ENCODE measurements at regions of chr3 and their contacts with region 1.

Region 1: DNA sequence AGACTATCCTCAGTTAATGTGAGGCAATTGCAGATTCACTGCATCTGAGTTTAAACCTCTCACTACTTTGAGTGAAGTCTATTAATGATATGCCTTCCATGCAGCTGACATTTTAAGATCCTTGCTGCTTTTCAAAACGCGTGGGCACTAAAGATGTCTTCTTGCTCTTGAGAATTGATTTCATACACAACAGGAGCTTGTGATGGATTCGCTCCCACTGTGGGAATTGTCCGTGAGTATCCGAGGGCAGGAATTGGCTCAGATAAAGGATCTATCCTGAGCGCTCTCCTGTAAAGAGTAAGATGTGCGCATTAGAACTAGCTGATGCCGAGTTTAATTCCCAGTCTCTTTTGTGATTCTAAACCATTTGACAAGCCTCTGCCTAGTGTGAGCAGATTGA is 167.9 kb downstream of the ROBO2 start:
- DNase-seq: no peak
- H3K4me3 ChIP-seq: no peak overlapping the region
- H3K27ac ChIP-seq: no peak overlapping the region
- H3K4me1 ChIP-seq: no peaks in the 10 kb centered on the region
- H3K27me3 ChIP-seq: no peaks in the 10 kb centered on the region
- CTCF ChIP-seq: no peak

Region 2: DNA sequence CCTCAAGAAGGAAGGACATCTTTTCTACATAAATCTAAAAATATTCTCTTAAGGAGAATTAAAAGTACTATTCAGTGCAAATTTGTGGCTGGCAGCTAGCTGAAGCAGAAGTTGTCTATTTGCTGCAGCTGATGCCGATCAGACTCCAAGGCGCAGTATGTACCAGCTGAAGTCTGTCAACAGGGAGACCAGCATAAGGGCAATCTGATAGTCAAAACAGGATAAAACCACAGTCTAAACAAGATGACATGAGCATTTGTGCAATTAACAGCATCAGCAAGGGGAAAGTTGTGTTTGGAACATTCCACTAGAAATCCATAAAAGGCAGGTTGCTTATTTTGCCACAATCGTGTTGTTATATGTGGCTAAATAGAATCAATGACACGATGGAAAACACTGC is 366.0 kb before region 1 on chr3:
- CTCF ChIA-PET with region 1: no interaction called
- POLR2A ChIA-PET with region 1: interaction called, 10 read pairs
- intact Hi-C with region 1: no loop called
- DNase-seq: no peak
- H3K4me3 ChIP-seq: no peak overlapping the region
- H3K27ac ChIP-seq: no peak overlapping the region
- H3K4me1 ChIP-seq: no peaks in the 10 kb centered on the region
- H3K27me3 ChIP-seq: no peaks in the 10 kb centered on the region
- CTCF ChIP-seq: no peak

Region 3: GRCh38 chr3:77134769-77135168 is 73.0 kb before region 1 on chr3:
- CTCF ChIA-PET with region 1: no interaction called
- POLR2A ChIA-PET with region 1: no interaction called
- intact Hi-C with region 1: no loop called
- DNase-seq: no peak
- H3K4me3 ChIP-seq: no peak overlapping the region
- H3K27ac ChIP-seq: no peak overlapping the region
- H3K4me1 ChIP-seq: no peaks in the 10 kb centered on the region
- H3K27me3 ChIP-seq: no peaks in the 10 kb centered on the region
- CTCF ChIP-seq: no peak

Region 4: GRCh38 chr3:77158730-77159581 is 48.8 kb before region 1 on chr3:
- CTCF ChIA-PET with region 1: no interaction called
- POLR2A ChIA-PET with region 1: no interaction called
- intact Hi-C with region 1: no loop called
- DNase-seq: no peak
- H3K4me3 ChIP-seq: no peak overlapping the region
- H3K27ac ChIP-seq: no peak overlapping the region
- H3K4me1 ChIP-seq: no peaks in the 10 kb centered on the region
- H3K27me3 ChIP-seq: no peaks in the 10 kb centered on the region
- CTCF ChIP-seq: no peak

Region 5: DNA sequence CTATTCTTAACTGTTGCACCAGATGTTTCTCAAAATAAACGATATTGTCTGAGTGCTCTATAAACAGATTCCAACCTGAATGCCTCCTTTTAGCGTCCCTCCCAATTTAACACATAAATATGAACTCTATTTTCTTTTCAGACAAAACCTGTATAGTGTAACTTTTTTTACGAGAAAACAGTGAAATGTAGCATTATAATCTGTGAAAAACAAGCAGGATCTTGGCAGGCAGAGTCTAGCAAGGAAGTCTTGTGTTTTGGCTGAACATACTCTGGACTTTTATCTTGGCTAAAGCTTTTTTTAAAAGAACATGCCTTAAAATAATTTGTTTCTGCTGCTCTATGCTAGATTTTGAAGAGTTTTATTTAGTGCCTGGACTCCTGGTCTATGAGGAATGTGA is 17.4 kb before region 1 on chr3:
- CTCF ChIA-PET with region 1: no interaction called
- POLR2A ChIA-PET with region 1: no interaction called
- intact Hi-C with region 1: no loop called
- DNase-seq: no peak
- H3K4me3 ChIP-seq: no peak overlapping the region
- H3K27ac ChIP-seq: no peak overlapping the region
- H3K4me1 ChIP-seq: no peaks in the 10 kb centered on the region
- H3K27me3 ChIP-seq: no peaks in the 10 kb centered on the region
- CTCF ChIP-seq: no peak